ENCODE measurements at regions of chr9 and their contacts with region 1.

Region 1: DNA sequence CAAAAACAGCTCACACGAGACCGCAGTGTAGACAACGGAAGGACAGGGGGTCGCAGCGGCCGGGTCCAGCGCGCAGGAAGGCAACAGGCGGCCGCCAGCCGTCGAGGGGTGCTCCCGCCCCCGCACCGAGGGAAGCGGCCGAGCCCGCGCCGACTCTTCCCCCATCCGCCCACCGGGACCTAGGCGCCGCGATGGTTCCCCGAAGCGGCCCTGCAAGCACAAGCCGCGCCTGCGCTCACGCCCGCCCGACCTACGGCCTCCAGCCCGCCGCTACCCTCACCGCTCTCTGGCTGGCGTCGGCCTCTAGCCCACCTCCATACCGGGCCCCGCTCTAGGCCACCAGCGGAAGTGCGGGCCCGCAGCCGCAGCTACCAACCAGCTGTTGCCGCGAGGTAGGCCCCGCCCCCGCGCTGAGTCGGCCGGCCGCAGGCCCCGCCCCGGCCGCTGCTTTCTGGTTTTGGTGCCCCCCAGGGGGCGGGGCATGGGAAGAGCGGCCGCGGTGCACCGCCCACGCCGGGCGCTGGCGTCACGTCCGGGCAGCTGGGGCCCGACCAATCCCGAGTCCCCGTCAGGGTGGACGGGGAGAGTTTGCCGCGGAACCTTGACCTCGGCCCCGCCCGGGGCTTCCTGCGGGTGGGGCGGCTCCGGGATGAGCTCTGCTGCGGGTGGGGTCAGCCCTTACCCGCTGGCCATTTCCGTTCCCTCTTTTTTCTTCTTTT is at the start of gene SETX:
- DNase-seq: peak; percentile 96
- H3K4me3 Mint-ChIP-seq: peak within 1 kb of the TSS; percentile 88
- H3K27ac Mint-ChIP-seq: peak within 1 kb of the TSS; percentile 95
- H3K4me1 Mint-ChIP-seq: peaks cover 35% of the 10 kb centered on the region
- H3K27me3 Mint-ChIP-seq: no peaks in the 10 kb centered on the region
- total RNA-seq, gene SETX: 26.4 to 26.7 TPM

Region 2: DNA sequence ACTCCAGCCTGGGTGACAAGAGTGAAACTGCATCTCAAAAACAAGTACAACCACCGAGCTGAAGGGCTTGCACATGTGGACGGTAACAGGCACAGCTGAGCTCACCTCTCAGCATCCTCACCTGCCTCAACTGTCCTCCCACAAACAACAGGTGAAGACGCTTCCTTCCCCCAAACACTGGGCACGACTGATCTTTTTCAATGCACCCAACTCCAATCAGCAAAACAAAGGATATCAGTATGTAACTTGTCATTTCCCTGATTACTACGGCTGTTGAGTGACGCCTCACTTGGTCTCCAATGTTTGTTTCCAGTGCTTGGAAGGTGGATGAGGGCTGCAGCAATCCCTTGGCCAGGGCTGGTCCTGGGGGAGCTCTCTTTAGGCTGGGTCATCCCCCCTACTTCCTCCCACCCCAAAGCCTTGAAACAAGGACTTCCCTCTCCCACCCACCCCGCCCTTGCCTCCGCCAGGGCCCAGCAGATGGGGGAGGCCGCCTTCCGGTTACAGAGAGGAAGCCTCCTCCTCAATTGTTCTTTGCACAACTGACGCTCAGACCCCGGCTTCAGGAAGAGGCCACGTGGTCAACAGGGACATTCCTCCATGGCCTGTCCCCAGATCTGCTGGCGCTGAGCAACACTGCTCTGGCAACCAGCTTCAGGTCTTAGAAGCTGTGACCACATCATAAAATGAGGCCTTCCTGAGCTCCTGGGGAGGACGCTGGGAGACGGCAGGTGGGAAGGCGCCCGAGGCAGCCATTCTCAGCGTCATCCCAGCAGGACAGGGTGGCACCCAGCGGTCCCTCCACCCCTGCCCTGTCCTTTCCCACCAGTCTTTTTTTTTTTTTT is 1084.4 kb before region 1 on chr9:
- CTCF ChIA-PET with region 1: no interaction called
- intact Hi-C with region 1: loop called (anchors 5 kb)
- DNase-seq: peak; percentile 81
- H3K4me3 Mint-ChIP-seq: peak overlapping the region; percentile 96
- H3K27ac Mint-ChIP-seq: peak overlapping the region; percentile 99
- H3K4me1 Mint-ChIP-seq: peaks cover 56% of the 10 kb centered on the region
- H3K27me3 Mint-ChIP-seq: no peaks in the 10 kb centered on the region

Region 3: DNA sequence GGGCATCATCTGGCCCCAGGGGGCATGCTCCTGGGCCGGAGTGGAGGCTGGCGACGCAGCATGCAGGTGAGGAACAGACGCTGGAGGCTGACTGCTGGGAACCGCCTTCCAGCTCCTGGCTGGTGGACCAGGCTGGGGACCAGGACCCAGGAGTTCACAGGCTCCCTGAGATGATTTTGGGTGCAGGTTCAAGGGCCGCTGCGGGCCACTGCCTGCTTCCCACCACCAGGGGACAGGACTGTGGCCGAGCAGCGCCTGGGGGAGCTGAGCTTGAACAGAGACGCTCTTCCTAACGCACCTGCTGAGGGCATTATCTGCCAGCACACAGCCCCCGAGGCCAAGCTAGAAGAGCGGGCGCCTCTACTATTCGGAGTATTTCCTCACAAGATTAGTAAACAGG is 482.8 kb before region 1 on chr9:
- CTCF ChIA-PET with region 1: no interaction called
- intact Hi-C with region 1: no loop called
- DNase-seq: no peak
- H3K4me3 Mint-ChIP-seq: no peak overlapping the region
- H3K27ac Mint-ChIP-seq: no peak overlapping the region
- H3K4me1 Mint-ChIP-seq: no peaks in the 10 kb centered on the region
- H3K27me3 Mint-ChIP-seq: no peaks in the 10 kb centered on the region

Region 4: DNA sequence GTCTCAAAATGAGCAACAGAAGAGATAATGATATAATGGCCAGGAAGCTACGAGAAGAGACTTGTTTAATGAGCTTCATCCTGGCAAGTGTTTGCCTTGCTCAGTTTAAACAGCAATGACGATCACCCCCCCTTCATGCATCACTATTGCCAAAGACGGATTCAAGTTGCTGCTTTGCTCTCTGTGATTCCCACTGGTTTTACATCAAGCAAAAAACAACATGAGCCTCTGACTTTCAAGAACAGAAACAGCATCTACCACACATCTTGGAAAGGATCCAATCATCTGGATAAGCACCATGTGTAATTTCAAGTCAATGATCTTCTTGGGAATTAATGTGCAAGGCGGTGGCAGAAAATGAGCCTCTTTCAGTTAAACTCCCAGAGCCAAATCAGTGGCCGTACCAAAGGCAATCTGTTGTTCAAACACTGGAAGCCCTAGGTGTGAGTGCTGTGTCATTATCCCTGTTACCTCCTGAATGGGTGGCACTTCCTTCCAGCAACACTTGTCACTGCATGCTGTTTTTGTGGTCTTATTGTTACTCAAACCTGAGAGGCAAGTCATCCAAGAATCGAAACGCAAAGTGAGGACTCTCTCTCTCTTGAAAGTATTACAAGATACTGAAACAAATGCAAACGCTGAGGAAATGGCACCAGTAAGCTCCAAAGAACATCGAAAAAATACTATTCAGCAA is 348.0 kb before region 1 on chr9:
- CTCF ChIA-PET with region 1: no interaction called
- intact Hi-C with region 1: loop called (anchors 1 kb)
- DNase-seq: peak; percentile 72
- H3K4me3 Mint-ChIP-seq: no peak overlapping the region
- H3K27ac Mint-ChIP-seq: no peak overlapping the region
- H3K4me1 Mint-ChIP-seq: peaks cover 35% of the 10 kb centered on the region
- H3K27me3 Mint-ChIP-seq: no peaks in the 10 kb centered on the region

Region 5: DNA sequence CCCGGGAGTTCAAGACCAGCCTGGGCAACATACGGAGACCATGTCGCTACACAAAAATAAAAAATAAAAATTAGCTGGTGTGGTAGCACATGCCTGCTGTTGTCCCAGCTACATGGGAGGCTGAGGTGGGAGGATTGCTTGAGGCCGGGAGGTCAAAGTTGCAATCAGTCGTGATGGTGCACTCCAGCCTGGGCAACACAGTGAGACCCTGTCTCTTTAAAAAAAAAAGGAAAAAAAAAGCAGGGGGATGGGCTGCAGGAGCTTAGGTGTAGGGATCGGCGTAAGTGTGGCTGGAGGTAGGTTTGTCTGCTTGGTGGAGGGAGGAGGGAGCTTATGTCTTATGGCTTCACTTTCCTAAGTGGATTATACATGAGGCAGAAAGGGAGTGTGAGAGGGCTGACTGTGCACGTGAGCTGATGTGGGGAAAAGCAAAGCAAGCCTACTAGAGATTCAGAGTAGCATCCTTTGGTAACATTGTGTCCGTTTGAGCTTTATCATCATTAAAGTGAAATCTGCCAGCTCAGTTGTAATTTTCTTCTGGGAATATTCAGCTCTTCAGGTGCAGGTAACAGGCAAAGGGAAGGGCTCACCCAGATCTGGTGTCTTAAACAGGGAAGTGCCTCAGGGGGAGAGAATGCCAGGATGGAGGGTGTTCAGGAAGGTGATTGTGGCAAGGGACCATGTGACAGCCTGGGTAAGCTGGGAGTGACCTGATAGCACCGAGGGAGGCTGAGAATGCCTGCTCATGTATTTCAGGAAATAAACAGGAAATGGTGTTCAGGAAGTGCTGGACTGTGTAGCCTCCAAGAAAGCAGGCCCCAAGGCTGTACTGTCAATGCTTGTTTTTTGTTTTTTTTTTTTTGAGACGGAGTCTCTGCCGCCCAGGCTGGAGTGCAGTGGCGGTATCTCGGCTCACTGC is 17.6 kb after region 1 on chr9:
- CTCF ChIA-PET with region 1: interaction called, 6 read pairs
- intact Hi-C with region 1: loop called (anchors 1 kb)
- DNase-seq: no peak
- H3K4me3 Mint-ChIP-seq: no peak overlapping the region
- H3K27ac Mint-ChIP-seq: no peak overlapping the region
- H3K4me1 Mint-ChIP-seq: peaks cover 20% of the 10 kb centered on the region
- H3K27me3 Mint-ChIP-seq: no peaks in the 10 kb centered on the region

Region 6: DNA sequence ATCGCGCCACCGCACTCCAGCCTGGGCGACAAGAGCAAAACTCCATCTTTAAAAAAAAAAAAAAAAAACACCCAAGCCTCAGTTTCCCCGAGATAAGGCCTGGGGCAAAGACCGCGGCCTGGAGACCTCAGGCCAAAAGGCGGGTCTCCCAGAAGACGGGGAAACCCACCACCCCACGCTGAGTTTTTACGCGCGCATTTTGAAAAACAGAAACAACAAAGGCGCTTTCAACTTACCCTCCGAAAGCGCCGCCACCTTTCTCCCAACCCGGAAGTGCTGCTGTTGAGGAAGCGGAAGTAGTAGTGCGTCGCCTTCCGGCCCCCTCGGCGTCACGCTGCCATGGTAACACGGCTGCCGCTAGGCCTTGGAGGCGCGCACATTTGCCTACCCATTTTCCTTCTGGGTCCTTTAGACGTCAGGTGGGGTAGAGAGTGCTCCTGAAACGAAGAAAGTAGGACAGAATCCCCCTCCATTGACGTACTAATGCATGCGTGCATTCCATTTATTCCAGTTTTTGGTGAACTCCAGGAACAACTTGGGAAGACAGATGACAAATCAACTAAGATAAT is 51.8 kb after region 1 on chr9 and contains the start of gene TTF1:
- CTCF ChIA-PET with region 1: interaction called, 5 read pairs
- intact Hi-C with region 1: loop called (anchors 1 kb)
- DNase-seq: peak; percentile 96
- H3K4me3 Mint-ChIP-seq: peak within 1 kb of the TSS; percentile 95
- H3K27ac Mint-ChIP-seq: peak within 1 kb of the TSS; percentile 90
- H3K4me1 Mint-ChIP-seq: peaks cover 53% of the 10 kb centered on the region
- H3K27me3 Mint-ChIP-seq: peaks cover 10% of the 10 kb centered on the region
- total RNA-seq, gene TTF1: 27.1 to 29.9 TPM

Region 7: GRCh38 chr9:132418726-132419363 is 64.0 kb after region 1 on chr9:
- CTCF ChIA-PET with region 1: no interaction called
- intact Hi-C with region 1: no loop called
- DNase-seq: no peak
- H3K4me3 Mint-ChIP-seq: no peak overlapping the region
- H3K27ac Mint-ChIP-seq: no peak overlapping the region
- H3K4me1 Mint-ChIP-seq: no peaks in the 10 kb centered on the region
- H3K27me3 Mint-ChIP-seq: peaks cover 48% of the 10 kb centered on the region

Region 8: GRCh38 chr9:132669698-132670456 is 315.1 kb after region 1 on chr9 and contains the start of gene DDX31:
- CTCF ChIA-PET with region 1: no interaction called
- intact Hi-C with region 1: loop called (anchors 5 kb)
- DNase-seq: peak; percentile 85
- H3K4me3 Mint-ChIP-seq: peak within 1 kb of the TSS; percentile 89
- H3K27ac Mint-ChIP-seq: peak within 1 kb of the TSS; percentile 88
- H3K4me1 Mint-ChIP-seq: peaks cover 47% of the 10 kb centered on the region
- H3K27me3 Mint-ChIP-seq: no peaks in the 10 kb centered on the region
- total RNA-seq, gene DDX31: 13.7 to 15.0 TPM